ENCODE measurements at regions of chr5 and their contacts with region 1.

Region 1: GRCh38 chr5:923281-923873 is 30.7 kb downstream of the TRIP13 start:
- DNase-seq: peak; percentile 77
- H3K4me3 Mint-ChIP-seq: no peak overlapping the region
- H3K27ac Mint-ChIP-seq: no peak overlapping the region
- H3K4me1 Mint-ChIP-seq: peaks cover 6% of the 10 kb centered on the region
- H3K27me3 Mint-ChIP-seq: peaks cover 29% of the 10 kb centered on the region

Region 2: DNA sequence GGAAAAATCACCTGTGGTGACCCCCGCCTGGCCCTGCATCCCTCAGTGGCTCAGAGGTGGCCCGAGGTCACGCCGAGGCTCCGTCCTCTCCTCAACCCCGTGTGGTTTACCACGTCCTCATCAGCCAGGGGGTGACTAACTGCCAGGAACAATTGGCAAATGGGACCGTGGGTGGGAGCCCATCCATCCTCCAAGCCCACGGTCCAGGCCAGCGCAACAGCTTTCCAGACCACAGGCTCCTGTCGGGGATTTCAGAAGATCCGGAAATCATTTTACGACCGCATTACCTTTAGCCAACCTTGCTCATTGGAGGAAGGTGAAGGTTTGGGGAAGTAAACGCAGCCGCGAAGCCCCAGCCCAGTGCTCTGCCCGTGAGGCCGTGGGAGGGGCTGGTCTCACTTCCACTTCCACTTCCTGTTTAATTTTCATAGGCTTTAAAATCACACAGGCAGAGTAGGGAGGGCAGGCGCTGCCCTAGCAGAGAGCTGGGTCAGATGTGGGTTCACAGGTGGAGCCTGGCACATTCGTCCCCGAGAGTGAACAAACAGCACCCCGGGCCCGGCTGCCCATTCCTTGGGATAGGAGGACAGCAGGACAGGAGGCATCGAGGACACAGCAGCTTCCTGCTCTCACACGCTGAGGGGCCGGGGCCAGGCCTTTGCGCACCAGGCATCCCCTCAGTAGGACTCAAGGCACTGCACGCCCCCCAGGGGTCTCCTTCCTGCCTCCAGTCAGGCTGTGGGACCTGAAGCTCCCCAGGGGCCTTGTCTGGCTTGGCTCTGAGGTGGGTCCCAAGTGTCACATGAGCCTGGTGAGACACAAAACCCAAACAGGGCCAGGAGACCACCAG is 379.3 kb before region 1 on chr5:
- CTCF ChIA-PET with region 1: no interaction called
- intact Hi-C with region 1: no loop called
- DNase-seq: peak; percentile 70
- H3K4me3 Mint-ChIP-seq: peak overlapping the region; percentile 32
- H3K27ac Mint-ChIP-seq: peak overlapping the region; percentile 41
- H3K4me1 Mint-ChIP-seq: peaks cover 6% of the 10 kb centered on the region
- H3K27me3 Mint-ChIP-seq: peaks cover 6% of the 10 kb centered on the region

Region 3: GRCh38 chr5:956941-957747 is 33.8 kb after region 1 on chr5:
- CTCF ChIA-PET with region 1: no interaction called
- intact Hi-C with region 1: loop called (anchors 1 kb)
- DNase-seq: peak; percentile 79
- H3K4me3 Mint-ChIP-seq: no peak overlapping the region
- H3K27ac Mint-ChIP-seq: no peak overlapping the region
- H3K4me1 Mint-ChIP-seq: peaks cover 23% of the 10 kb centered on the region
- H3K27me3 Mint-ChIP-seq: peaks cover 15% of the 10 kb centered on the region

Region 4: GRCh38 chr5:1004461-1005248 is 81.3 kb after region 1 on chr5:
- CTCF ChIA-PET with region 1: interaction called, 11 read pairs
- intact Hi-C with region 1: no loop called
- DNase-seq: peak; percentile 70
- H3K4me3 Mint-ChIP-seq: peak overlapping the region; percentile 50
- H3K27ac Mint-ChIP-seq: no peak overlapping the region
- H3K4me1 Mint-ChIP-seq: peaks cover 22% of the 10 kb centered on the region
- H3K27me3 Mint-ChIP-seq: peaks cover 31% of the 10 kb centered on the region

Region 5: GRCh38 chr5:1011226-1011631 is 87.9 kb after region 1 on chr5:
- CTCF ChIA-PET with region 1: interaction called, 11 read pairs
- intact Hi-C with region 1: loop called (anchors 1 kb)
- DNase-seq: peak; percentile 71
- H3K4me3 Mint-ChIP-seq: no peak overlapping the region
- H3K27ac Mint-ChIP-seq: no peak overlapping the region
- H3K4me1 Mint-ChIP-seq: peaks cover 13% of the 10 kb centered on the region
- H3K27me3 Mint-ChIP-seq: peaks cover 43% of the 10 kb centered on the region

Region 6: DNA sequence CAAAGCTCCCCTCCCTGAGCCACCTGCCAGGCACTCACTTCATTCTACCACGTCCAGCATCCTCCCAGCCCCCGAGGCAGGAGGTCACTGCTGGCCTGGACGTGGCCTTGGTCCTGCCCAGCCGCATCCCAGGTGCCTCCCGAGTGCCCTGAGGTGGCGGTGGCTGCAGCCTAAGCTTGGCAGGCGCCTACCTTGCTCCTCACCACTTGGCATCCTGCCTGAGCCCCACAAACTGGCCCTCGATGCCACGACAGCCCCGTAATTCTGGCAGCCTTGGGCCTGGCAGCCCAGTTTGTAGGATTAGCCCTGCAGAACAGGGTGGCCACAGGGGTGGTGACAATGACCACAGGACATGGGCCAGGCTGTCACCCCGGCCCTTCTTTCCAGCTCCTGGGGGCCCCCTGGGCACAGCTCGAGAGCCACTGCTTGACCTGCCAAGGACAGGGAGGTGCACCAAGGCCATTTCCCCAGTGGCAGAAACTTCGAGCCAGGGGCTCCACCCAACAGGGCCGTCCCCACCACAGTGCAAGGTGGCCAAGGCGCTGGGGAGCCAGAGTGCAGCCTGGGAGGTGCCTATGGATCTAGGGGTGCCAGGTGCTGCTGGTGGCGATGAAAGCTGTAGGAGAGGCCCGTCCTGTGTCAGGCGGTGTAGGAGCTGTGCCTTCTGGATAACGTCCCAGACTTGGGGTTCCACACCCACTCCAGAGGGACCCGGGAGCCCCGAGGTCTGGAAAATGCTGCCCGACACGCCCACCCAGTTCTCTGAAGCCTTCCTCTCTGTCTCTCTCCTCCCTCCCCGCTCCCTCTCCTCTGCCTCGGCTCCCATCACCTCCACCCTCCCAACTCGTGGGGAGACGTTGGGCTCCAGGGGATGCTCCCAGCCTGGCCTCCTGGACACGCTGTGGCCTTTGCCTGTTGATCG is 103.6 kb after region 1 on chr5:
- CTCF ChIA-PET with region 1: no interaction called
- intact Hi-C with region 1: no loop called
- DNase-seq: no peak
- H3K4me3 Mint-ChIP-seq: no peak overlapping the region
- H3K27ac Mint-ChIP-seq: no peak overlapping the region
- H3K4me1 Mint-ChIP-seq: no peaks in the 10 kb centered on the region
- H3K27me3 Mint-ChIP-seq: no peaks in the 10 kb centered on the region

Region 7: DNA sequence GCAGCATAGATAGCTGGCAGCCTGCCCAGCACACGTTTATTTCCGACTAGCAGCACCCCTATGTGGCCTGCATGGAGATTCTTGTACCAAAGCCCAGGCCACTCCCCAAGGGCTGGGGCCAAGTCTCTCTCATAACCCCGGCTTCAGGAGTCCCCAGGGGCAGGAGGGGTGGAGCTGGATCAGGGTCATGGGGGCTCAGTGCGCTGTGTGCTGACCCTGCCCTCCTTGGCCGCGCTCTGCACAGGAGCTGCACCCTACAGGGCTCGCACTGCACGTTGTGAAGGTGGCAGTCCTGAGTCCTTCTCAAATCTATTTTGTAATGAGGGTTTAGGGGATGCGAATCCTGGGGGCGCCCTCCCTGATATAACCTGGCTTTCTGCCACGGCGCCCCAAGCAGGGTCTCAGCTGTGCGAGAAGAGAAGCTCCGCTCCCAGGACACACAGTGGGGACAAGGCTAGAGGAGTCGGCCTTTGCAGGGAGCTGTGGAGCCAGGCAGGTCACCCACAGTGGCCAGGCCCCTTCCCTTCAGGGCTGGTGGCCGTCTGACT is 113.8 kb after region 1 on chr5:
- CTCF ChIA-PET with region 1: no interaction called
- intact Hi-C with region 1: no loop called
- DNase-seq: no peak
- H3K4me3 Mint-ChIP-seq: no peak overlapping the region
- H3K27ac Mint-ChIP-seq: no peak overlapping the region
- H3K4me1 Mint-ChIP-seq: peaks cover 3% of the 10 kb centered on the region
- H3K27me3 Mint-ChIP-seq: no peaks in the 10 kb centered on the region

Region 8: GRCh38 chr5:1140171-1140817 is 216.9 kb after region 1 on chr5:
- CTCF ChIA-PET with region 1: interaction called, 8 read pairs
- intact Hi-C with region 1: loop called (anchors 1 kb)
- DNase-seq: peak; percentile 86
- H3K4me3 Mint-ChIP-seq: no peak overlapping the region
- H3K27ac Mint-ChIP-seq: no peak overlapping the region
- H3K4me1 Mint-ChIP-seq: peaks cover 3% of the 10 kb centered on the region
- H3K27me3 Mint-ChIP-seq: peaks cover 5% of the 10 kb centered on the region

Region 9: DNA sequence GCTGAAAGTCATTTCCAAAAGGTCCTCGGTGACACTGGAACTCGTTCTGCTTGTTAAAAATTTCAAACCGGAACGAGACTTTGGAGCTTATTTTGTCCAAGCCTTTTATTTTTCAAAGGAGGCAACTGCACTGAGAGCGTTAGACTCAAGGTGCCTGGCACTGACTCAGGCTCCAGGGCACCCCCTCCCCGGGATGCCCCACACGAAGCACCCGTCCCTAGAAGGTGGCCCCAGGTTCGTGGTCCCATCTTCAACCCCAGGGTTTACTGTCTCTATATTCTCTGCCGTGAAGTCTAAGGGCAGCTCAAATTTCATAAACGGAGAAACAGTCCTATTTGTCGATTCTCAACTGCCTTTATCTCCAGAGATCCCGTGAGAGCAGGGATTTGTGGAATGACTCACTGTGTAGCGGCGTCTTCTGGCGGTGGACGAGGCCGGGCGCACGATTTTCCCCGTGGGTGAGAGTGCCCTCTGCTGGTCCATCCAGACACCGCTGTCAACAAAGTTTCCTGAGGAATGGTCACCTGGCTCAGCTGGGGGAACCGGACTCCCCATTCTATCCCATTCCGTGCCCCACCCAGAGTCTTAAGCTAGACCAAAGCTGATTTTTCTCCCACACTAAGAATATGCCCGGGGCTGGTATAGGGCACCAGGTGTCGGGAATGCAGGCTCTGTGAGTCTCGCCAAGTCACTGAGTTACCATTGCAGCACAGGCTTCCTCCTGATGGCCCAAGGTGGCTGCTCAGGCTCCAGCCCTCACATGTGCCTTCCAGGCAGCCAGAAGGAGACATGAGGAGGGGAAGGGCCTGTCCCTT is 251.0 kb after region 1 on chr5:
- CTCF ChIA-PET with region 1: interaction called, 3 read pairs
- intact Hi-C with region 1: loop called (anchors 1 kb)
- DNase-seq: peak; percentile 65
- H3K4me3 Mint-ChIP-seq: no peak overlapping the region
- H3K27ac Mint-ChIP-seq: no peak overlapping the region
- H3K4me1 Mint-ChIP-seq: peaks cover 4% of the 10 kb centered on the region
- H3K27me3 Mint-ChIP-seq: no peaks in the 10 kb centered on the region

Measured in activated naive CD4-positive, alpha-beta T cell treated with anti-CD3 and anti-CD28 coated beads for 36 hours (primary cell).